OCI-LY7 (cell line): ENCODE measurements at regions of chr6 and their contacts with region 1.

Region 1: GRCh38 chr6:89080542-89081422 is at the start of gene PNRC1:
- DNase-seq: peak; percentile 99
- H3K4me3 ChIP-seq: peak within 1 kb of the TSS; percentile 96
- H3K27ac ChIP-seq: peak within 1 kb of the TSS; percentile 84
- H3K4me1 ChIP-seq: peaks cover 25% of the 10 kb centered on the region
- CTCF ChIP-seq: no peak
- total RNA-seq, gene PNRC1: 22.6 and 26.7 TPM in 2 replicates

Region 2: GRCh38 chr6:88963139-88964090 is 117.4 kb before region 1 on chr6 and contains the start of gene RNGTT:
- CTCF ChIA-PET with region 1: no interaction called
- POLR2A ChIA-PET with region 1: interaction called, 13 read pairs
- intact Hi-C with region 1: loop called (anchors 1 kb)
- DNase-seq: peak; percentile 97
- H3K4me3 ChIP-seq: peak within 1 kb of the TSS; percentile 95
- H3K27ac ChIP-seq: peak within 1 kb of the TSS; percentile 43
- H3K4me1 ChIP-seq: peaks cover 19% of the 10 kb centered on the region
- CTCF ChIP-seq: 0 out of 2 replicates have a peak, but pooled peaks have one; percentile 31
- total RNA-seq, gene RNGTT: 38.5 and 41.7 TPM in 2 replicates

Region 3: DNA sequence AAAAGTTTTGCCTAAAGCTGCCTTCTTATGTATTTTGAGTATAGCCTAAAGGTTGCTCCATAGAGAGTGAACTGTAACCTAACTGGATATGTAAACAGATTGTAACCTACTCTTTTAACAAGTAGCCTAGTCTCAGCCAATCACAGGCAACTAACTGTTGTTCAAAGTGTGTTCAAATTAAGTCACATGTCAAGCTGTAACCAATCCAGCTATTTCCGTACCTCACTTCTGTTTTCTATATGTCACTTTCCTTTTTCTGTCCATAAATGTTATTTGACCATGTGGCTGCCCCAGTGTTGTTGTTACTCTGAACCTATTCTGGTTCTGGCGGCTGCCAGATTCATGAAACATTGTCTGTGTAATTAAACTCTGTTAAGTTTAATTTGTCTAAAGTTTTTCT is 70.0 kb before region 1 on chr6:
- CTCF ChIA-PET with region 1: no interaction called
- POLR2A ChIA-PET with region 1: interaction called, 10 read pairs
- intact Hi-C with region 1: no loop called
- DNase-seq: no peak
- H3K4me3 ChIP-seq: no peak overlapping the region
- H3K27ac ChIP-seq: no peak overlapping the region
- H3K4me1 ChIP-seq: no peaks in the 10 kb centered on the region
- CTCF ChIP-seq: no peak

Region 4: GRCh38 chr6:89145787-89146646 is 65.2 kb after region 1 on chr6 and contains the start of gene PM20D2:
- CTCF ChIA-PET with region 1: interaction called, 6 read pairs
- POLR2A ChIA-PET with region 1: interaction called, 66 read pairs
- intact Hi-C with region 1: loop called (anchors 1 kb)
- DNase-seq: peak; percentile 86
- H3K4me3 ChIP-seq: peak within 1 kb of the TSS; percentile 76
- H3K27ac ChIP-seq: peak within 1 kb of the TSS; percentile 76
- H3K4me1 ChIP-seq: peaks cover 41% of the 10 kb centered on the region
- CTCF ChIP-seq: no peak
- total RNA-seq, gene PM20D2: 33.1 and 35.1 TPM in 2 replicates